A673 (cell line): ENCODE measurements at regions of chr2 and their contacts with region 1.

Region 1: GRCh38 chr2:188524519-188525113 is 232.9 kb downstream of the GULP1 start:
- DNase-seq: peak; percentile 81
- H3K4me3 ChIP-seq: no peak overlapping the region
- H3K27ac ChIP-seq: no peak overlapping the region
- H3K4me1 ChIP-seq: peaks cover 17% of the 10 kb centered on the region
- H3K27me3 ChIP-seq: no peaks in the 10 kb centered on the region
- CTCF ChIP-seq: peak; percentile 85

Region 2: DNA sequence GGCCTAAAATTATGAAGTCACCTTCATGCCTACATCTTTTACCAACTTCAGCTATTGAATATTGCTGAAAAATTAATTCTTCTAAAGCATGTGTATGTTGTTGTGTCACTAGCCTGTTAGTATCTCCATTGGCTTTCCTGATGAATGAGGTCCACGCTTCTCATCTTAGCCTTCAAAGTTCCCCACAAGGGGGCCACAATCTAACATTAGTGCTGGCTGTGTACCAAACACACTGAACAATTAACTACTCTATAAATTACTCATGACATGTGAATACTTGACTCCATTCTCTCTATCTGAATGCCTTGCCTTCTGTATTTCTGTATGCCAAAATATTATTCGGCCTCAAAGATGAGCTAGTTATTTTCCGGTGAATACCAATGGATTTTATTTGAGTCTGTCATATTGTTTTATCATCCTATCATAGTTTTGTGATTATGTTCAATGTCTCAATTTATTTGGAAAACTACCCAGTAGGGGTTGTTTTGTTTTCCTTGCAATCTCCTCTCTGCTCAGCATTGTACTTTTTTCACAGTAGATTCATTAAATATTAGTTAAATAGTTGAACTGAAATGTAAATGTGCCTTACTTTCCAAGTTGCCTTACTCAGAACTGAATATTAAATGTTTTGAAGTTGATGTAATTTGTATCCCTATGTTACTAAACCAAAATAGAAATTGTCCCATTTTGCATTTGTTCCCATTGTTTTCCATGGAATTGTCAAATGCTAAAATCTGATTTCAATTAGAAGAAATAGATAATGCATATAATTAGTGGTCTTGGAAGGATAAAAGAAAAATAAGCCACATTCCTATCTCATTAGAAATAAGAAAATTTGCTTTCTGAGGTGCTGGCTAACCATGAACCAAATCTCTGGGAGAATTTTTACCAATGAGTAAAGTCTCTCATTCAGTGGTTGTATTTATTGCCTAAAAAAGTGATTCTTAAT is 241.2 kb after region 1 on chr2:
- CTCF ChIA-PET with region 1: no interaction called
- POLR2A ChIA-PET with region 1: no interaction called
- intact Hi-C with region 1: loop called (anchors 5 kb)
- DNase-seq: peak; percentile 87
- H3K4me3 ChIP-seq: no peak overlapping the region
- H3K27ac ChIP-seq: no peak overlapping the region
- H3K4me1 ChIP-seq: peaks cover 10% of the 10 kb centered on the region
- H3K27me3 ChIP-seq: no peaks in the 10 kb centered on the region
- CTCF ChIP-seq: peak; percentile 73

Region 3: DNA sequence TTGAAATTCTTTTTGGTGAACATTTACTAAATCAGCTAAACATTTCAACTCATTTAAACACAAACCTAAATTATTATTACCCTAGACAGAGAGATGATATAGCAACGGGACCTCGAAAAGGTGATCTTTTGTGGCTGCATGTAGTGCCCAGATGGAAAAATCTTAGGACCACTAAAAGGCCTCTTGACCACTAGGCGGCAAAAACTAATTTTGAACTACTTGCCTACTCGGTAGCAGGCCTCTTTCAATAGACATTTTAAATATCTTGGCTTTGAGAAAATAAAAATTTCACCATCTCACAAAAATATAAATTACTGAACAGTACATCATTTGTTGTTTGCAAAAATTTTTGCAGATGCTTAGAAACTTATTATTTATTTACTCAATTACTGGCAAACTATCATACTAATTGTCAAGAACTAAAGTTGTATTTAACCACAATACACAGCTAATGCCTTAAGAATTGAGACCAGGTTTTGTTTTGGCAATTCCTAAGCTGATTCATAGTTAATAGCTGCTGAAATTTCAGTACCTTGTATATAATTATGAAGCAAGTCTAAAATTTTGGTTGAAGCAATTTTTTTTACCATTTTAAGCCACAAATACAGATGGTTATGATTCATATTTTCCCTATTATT is 458.9 kb after region 1 on chr2:
- CTCF ChIA-PET with region 1: interaction called, 16 read pairs
- POLR2A ChIA-PET with region 1: no interaction called
- intact Hi-C with region 1: no loop called
- DNase-seq: no peak
- H3K4me3 ChIP-seq: no peak overlapping the region
- H3K27ac ChIP-seq: no peak overlapping the region
- H3K4me1 ChIP-seq: peaks cover 5% of the 10 kb centered on the region
- H3K27me3 ChIP-seq: no peaks in the 10 kb centered on the region
- CTCF ChIP-seq: 0 out of 2 replicates have a peak, but pooled peaks have one; percentile 22

Region 4: GRCh38 chr2:189179570-189179950 is 654.9 kb after region 1 on chr2 and contains the start of gene COL5A2:
- CTCF ChIA-PET with region 1: no interaction called
- POLR2A ChIA-PET with region 1: no interaction called
- intact Hi-C with region 1: loop called (anchors 10 kb)
- DNase-seq: peak; percentile 85
- H3K4me3 ChIP-seq: peak within 1 kb of the TSS; percentile 67
- H3K27ac ChIP-seq: peak within 1 kb of the TSS; percentile 74
- H3K4me1 ChIP-seq: peaks cover 19% of the 10 kb centered on the region
- H3K27me3 ChIP-seq: no peaks in the 10 kb centered on the region
- CTCF ChIP-seq: no peak
- total RNA-seq, gene COL5A2: 90.7 and 92.2 TPM in 2 replicates

Region 5: GRCh38 chr2:189347540-189347939 is 822.9 kb after region 1 on chr2:
- CTCF ChIA-PET with region 1: no interaction called
- POLR2A ChIA-PET with region 1: no interaction called
- intact Hi-C with region 1: loop called (anchors 5 kb)
- DNase-seq: peak; percentile 65
- H3K4me3 ChIP-seq: no peak overlapping the region
- H3K27ac ChIP-seq: no peak overlapping the region
- H3K4me1 ChIP-seq: peaks cover 5% of the 10 kb centered on the region
- H3K27me3 ChIP-seq: no peaks in the 10 kb centered on the region
- CTCF ChIP-seq: peak; percentile 41